GM23248 (cell line): ENCODE measurements at regions of chr2 and their contacts with region 1.

Region 1: DNA sequence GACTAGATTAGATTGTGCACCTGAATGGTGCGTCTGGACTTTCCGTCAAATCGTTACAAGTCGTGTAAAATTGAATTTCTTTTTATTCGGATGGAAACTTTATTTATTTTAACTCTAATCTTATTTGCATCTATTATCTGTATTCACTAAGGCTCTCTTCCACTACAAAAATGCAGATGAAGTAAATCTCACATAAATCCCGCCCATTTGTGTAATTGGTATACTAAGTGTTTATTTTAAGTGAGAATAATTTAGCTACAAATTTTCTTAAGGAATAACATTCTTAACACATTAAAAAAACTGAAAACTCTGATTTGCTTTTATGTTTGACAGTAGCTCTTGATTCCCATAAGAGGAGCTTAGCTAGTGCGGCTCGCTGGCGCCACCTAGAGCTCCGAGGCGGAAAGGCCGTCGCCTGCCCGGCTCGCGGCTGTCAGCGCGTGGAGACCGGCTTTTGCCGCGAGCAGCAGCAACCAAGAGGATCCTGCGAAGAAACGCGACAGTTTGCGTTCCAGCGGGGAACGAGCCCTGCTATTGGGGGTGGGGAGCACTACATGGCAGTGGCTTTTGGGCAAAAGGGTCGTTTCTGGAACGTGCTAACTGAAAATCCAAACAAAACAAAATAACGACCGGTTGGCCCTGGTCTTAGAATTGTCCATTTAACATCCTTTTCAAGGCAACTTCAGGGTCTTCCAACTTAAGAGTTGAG is 6.7 kb downstream of the SP9 start:
- DNase-seq: peak; percentile 86
- H3K4me3 ChIP-seq: peak overlapping the region; percentile 69
- H3K27ac ChIP-seq: no peak overlapping the region
- H3K4me1 ChIP-seq: no peaks in the 10 kb centered on the region
- H3K27me3 ChIP-seq: peaks cover 31% of the 10 kb centered on the region

Region 2: GRCh38 chr2:173402405-173402974 is 939.0 kb before region 1 on chr2:
- in situ Hi-C with region 1: loop called (anchors 25 kb)
- DNase-seq: peak; percentile 86
- H3K4me3 ChIP-seq: peak overlapping the region; percentile 63
- H3K27ac ChIP-seq: no peak overlapping the region
- H3K4me1 ChIP-seq: no peaks in the 10 kb centered on the region
- H3K27me3 ChIP-seq: peaks cover 54% of the 10 kb centered on the region

Region 3: GRCh38 chr2:173752152-173752551 is 589.3 kb before region 1 on chr2:
- in situ Hi-C with region 1: loop called (anchors 10 kb)
- DNase-seq: peak; percentile 39
- H3K4me3 ChIP-seq: no peak overlapping the region
- H3K27ac ChIP-seq: no peak overlapping the region
- H3K4me1 ChIP-seq: no peaks in the 10 kb centered on the region
- H3K27me3 ChIP-seq: no peaks in the 10 kb centered on the region; the same call in none of the 2 replicates

Region 4: DNA sequence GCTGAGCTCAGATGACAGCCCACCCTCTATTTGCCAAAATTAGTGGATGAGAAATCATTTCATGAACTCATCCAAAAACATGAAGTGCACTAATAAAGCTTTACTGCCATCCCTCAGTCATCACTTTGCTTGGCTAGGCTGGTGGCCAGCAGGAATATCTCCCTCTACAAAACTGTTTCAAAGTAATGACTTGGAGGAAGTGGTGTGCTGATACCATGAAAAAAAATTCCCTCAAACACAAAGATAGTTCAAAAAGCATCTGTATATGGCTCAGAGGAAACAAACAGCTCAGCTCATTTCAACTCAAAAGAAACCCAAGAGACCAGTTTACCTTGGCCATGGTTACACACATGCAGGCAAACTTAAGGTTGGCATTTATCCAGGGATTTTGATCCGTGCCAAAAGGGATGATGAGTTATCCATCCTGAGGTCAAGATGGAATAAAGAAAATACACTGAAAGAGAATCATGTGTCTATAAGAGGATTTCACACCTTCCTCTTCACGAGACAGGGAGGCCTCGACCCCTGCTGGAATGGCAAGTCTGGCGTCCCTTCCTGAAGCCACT is 274.5 kb after region 1 on chr2:
- in situ Hi-C with region 1: no loop called
- DNase-seq: peak; percentile 75
- H3K4me3 ChIP-seq: 0 out of 2 replicates have a peak overlapping the region, but pooled peaks have one; percentile 3
- H3K27ac ChIP-seq: peak overlapping the region; percentile 83
- H3K4me1 ChIP-seq: peaks cover 58% of the 10 kb centered on the region
- H3K27me3 ChIP-seq: no peaks in the 10 kb centered on the region